ENCODE measurements at regions of chr5 and their contacts with region 1.

Region 1: GRCh38 chr5:142356716-142357473 is 32.1 kb upstream of the SPRY4 start:
- DNase-seq: peak; percentile 72 to 94 (median 80)
- ATAC-seq: peak; percentile 85
- H3K4me3 ChIP-seq: peak overlapping the region; percentile 65
- H3K4me3 Mint-ChIP-seq: peak overlapping the region; percentile 93
- H3K27ac ChIP-seq: peak overlapping the region in 1 of 2 donors; percentile 56
- H3K27ac Mint-ChIP-seq: peak overlapping the region; percentile 73
- H3K4me1 ChIP-seq: peaks cover 42% of the 10 kb centered on the region
- H3K4me1 Mint-ChIP-seq: peaks cover 67% of the 10 kb centered on the region
- H3K27me3 ChIP-seq: no peaks in the 10 kb centered on the region
- H3K27me3 Mint-ChIP-seq: no peaks in the 10 kb centered on the region
- CTCF ChIP-seq: no peak

Region 2: GRCh38 chr5:141681695-141682641 is 674.9 kb before region 1 on chr5 and contains the start of gene ARAP3:
- CTCF ChIA-PET with region 1: no interaction called
- POLR2A ChIA-PET with region 1: no interaction called
- intact Hi-C with region 1: loop called in 1 of 2 experiments (anchors 5 kb)
- DNase-seq: peak in 10 of 14 experiments; percentile 22 to 66 (median 38)
- ATAC-seq: peak; percentile 66
- H3K4me3 ChIP-seq: peak within 1 kb of the TSS; percentile 51
- H3K4me3 Mint-ChIP-seq: peak within 1 kb of the TSS; percentile 62
- H3K27ac ChIP-seq: no peak within 1 kb of the TSS
- H3K27ac Mint-ChIP-seq: no peak within 1 kb of the TSS
- H3K4me1 ChIP-seq: peaks cover 37% of the 10 kb centered on the region
- H3K4me1 Mint-ChIP-seq: peaks cover 29% of the 10 kb centered on the region
- H3K27me3 ChIP-seq: no peaks in the 10 kb centered on the region
- H3K27me3 Mint-ChIP-seq: no peaks in the 10 kb centered on the region
- CTCF ChIP-seq: no peak
- total RNA-seq, gene ARAP3: 0.30 to 0.31 TPM

Region 3: GRCh38 chr5:142221091-142221860 is 135.6 kb before region 1 on chr5:
- CTCF ChIA-PET with region 1: no interaction called
- POLR2A ChIA-PET with region 1: interaction called, 8 read pairs
- intact Hi-C with region 1: loop called in 1 of 2 experiments (anchors 2 kb)
- DNase-seq: no peak
- ATAC-seq: no peak
- H3K4me3 ChIP-seq: no peak overlapping the region
- H3K4me3 Mint-ChIP-seq: no peak overlapping the region
- H3K27ac ChIP-seq: no peak overlapping the region
- H3K27ac Mint-ChIP-seq: no peak overlapping the region
- H3K4me1 ChIP-seq: peaks cover 29% of the 10 kb centered on the region
- H3K4me1 Mint-ChIP-seq: peaks cover 42% of the 10 kb centered on the region
- H3K27me3 ChIP-seq: no peaks in the 10 kb centered on the region
- H3K27me3 Mint-ChIP-seq: no peaks in the 10 kb centered on the region
- CTCF ChIP-seq: no peak

Region 4: GRCh38 chr5:142324871-142325724 is 31.8 kb before region 1 on chr5 and contains the start of gene SPRY4:
- CTCF ChIA-PET with region 1: interaction called, 5 read pairs
- POLR2A ChIA-PET with region 1: interaction called, 16 read pairs
- intact Hi-C with region 1: loop called (anchors 2 kb)
- DNase-seq: peak; percentile 51 to 86 (median 74)
- ATAC-seq: peak; percentile 81
- H3K4me3 ChIP-seq: peak within 1 kb of the TSS; percentile 61
- H3K4me3 Mint-ChIP-seq: peak within 1 kb of the TSS; percentile 87
- H3K27ac ChIP-seq: no peak within 1 kb of the TSS
- H3K27ac Mint-ChIP-seq: no peak within 1 kb of the TSS
- H3K4me1 ChIP-seq: peaks cover 33% of the 10 kb centered on the region
- H3K4me1 Mint-ChIP-seq: peaks cover 49% of the 10 kb centered on the region
- H3K27me3 ChIP-seq: peaks cover 54 to 58% of the 10 kb centered on the region in 2 experiments
- H3K27me3 Mint-ChIP-seq: peaks cover 81% of the 10 kb centered on the region
- CTCF ChIP-seq: no peak
- total RNA-seq, gene SPRY4: 0.16 to 0.34 TPM

Region 5: DNA sequence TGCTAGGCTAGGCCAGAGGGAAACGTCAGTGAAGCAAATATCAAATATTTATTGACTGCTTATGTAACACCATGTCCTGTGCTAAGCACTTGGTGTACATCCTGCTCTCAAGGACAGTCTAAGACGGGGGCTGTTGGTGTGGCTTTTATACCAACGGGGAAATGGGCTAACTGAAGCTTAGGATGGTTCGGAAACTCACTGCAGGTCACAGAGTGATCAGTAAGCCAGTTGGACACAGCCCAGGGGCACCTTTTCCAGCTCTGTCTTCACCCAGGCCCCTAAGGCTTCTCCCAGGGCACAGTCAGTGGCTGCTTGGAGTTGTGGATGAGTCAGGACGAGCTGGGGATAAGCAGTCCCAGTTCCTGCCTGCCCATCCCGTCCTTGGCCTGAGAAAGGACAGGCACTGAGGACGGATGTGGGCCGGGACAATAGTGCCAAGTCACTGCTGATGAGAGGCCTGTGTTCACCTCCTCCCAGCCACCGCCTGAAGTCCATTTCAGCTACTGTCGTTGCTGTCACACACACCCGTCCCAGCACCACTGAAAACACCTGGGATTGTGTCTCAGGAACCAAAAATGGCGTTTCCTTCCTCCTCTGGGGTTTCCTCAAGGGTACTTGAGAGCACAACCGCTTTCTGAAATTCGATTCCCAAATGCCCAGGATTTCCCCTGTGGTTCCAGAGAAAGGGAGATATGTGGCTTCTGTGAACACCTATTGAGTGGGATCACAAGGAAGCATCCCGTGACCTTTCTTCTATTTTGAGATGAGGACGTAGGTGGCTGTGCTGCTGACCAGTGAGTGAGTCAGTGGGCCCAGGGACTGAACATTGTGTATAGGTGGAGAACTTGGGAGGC is 14.5 kb before region 1 on chr5:
- CTCF ChIA-PET with region 1: no interaction called
- POLR2A ChIA-PET with region 1: no interaction called
- intact Hi-C with region 1: no loop called
- DNase-seq: no peak
- ATAC-seq: no peak
- H3K4me3 ChIP-seq: no peak overlapping the region
- H3K4me3 Mint-ChIP-seq: no peak overlapping the region
- H3K27ac ChIP-seq: no peak overlapping the region
- H3K27ac Mint-ChIP-seq: no peak overlapping the region
- H3K4me1 ChIP-seq: no peaks in the 10 kb centered on the region
- H3K4me1 Mint-ChIP-seq: no peaks in the 10 kb centered on the region
- H3K27me3 ChIP-seq: peaks cover 0 to 2% of the 10 kb centered on the region in 2 experiments
- H3K27me3 Mint-ChIP-seq: no peaks in the 10 kb centered on the region
- CTCF ChIP-seq: no peak

Region 6: GRCh38 chr5:142399891-142400290 is 43.0 kb after region 1 on chr5:
- CTCF ChIA-PET with region 1: no interaction called
- POLR2A ChIA-PET with region 1: no interaction called
- intact Hi-C with region 1: no loop called
- DNase-seq: no peak
- ATAC-seq: no peak
- H3K4me3 ChIP-seq: no peak overlapping the region
- H3K4me3 Mint-ChIP-seq: no peak overlapping the region
- H3K27ac ChIP-seq: no peak overlapping the region
- H3K27ac Mint-ChIP-seq: no peak overlapping the region
- H3K4me1 ChIP-seq: no peaks in the 10 kb centered on the region
- H3K4me1 Mint-ChIP-seq: no peaks in the 10 kb centered on the region
- H3K27me3 ChIP-seq: no peaks in the 10 kb centered on the region
- H3K27me3 Mint-ChIP-seq: no peaks in the 10 kb centered on the region
- CTCF ChIP-seq: no peak

Region 7: DNA sequence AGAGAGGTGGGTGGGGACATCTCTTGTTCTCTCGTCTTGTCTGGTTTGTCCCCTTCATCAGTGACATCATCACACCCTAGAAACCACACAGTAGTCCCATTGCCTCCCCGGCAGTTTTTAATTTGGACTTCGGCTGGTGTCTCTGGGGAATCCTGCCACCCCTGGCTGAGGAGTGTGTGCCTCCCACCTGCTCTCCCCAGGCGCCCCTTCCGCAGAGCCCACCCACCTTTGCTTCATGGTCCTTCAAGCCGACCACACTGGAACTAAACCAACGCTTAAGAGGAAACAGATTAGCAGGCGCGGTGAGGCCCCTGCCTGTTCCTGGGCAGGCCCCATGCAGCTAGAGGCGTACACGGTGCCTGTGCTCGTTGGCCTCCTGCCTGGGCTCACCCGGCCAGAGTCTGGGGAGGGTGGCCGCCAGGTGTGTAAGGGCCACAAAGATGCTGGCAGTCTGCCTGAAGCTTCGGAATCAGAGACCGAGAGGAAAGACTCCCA is 75.5 kb after region 1 on chr5:
- CTCF ChIA-PET with region 1: no interaction called
- POLR2A ChIA-PET with region 1: interaction called, 6 read pairs
- intact Hi-C with region 1: loop called (anchors 5 kb)
- DNase-seq: peak in 11 of 14 experiments; percentile 3 to 69 (median 15)
- ATAC-seq: peak; percentile 50
- H3K4me3 ChIP-seq: peak overlapping the region; percentile 14
- H3K4me3 Mint-ChIP-seq: peak overlapping the region; percentile 26
- H3K27ac ChIP-seq: peak overlapping the region; percentile 33 to 78
- H3K27ac Mint-ChIP-seq: peak overlapping the region; percentile 77
- H3K4me1 ChIP-seq: peaks cover 46% of the 10 kb centered on the region
- H3K4me1 Mint-ChIP-seq: peaks cover 43% of the 10 kb centered on the region
- H3K27me3 ChIP-seq: no peaks in the 10 kb centered on the region
- H3K27me3 Mint-ChIP-seq: no peaks in the 10 kb centered on the region
- CTCF ChIP-seq: no peak

Region 8: GRCh38 chr5:142512043-142513042 is 155.4 kb after region 1 on chr5:
- CTCF ChIA-PET with region 1: no interaction called
- POLR2A ChIA-PET with region 1: no interaction called
- intact Hi-C with region 1: no loop called
- DNase-seq: no peak
- ATAC-seq: no peak
- H3K4me3 ChIP-seq: no peak overlapping the region
- H3K4me3 Mint-ChIP-seq: no peak overlapping the region
- H3K27ac ChIP-seq: no peak overlapping the region
- H3K27ac Mint-ChIP-seq: no peak overlapping the region
- H3K4me1 ChIP-seq: no peaks in the 10 kb centered on the region
- H3K4me1 Mint-ChIP-seq: peaks cover 7% of the 10 kb centered on the region
- H3K27me3 ChIP-seq: no peaks in the 10 kb centered on the region
- H3K27me3 Mint-ChIP-seq: no peaks in the 10 kb centered on the region
- CTCF ChIP-seq: no peak